ENCODE measurements at regions of chr5 and their contacts with region 1.

Region 1: DNA sequence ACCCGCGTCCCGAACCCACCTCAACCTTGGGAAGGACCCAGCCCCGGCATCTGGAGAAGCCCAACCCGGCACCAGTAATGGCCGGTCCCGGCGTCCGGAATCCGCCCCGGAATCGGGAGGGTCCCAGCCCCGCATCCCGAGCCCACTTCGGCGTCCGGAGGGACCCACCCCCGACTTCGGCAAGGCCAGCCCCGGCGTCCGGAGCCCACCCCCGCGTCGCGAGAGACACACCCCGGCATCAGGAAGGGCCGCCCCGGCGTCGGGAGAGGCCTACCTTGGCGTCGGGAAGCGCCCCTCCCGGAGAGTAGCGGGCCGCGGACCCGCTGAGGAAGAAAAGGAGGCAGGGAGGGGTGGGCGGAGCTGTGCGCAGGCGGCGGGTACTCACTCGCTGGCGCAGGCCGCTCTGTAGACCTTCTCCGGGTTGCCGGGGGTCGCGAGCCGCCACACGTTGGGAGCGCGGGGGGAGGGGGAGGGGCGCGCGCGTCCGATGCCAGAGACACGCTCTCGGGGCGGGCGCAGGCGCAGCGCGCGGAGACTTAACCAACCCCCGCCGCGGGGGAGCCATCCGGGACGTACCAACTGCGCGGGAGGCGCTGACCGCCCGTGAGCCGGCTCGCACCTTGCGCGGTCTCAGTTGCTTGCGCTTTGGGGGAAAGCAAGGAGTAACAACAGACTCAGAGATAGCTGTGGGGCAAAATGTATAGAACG is at the start of gene UIMC1:
- DNase-seq: peak; percentile 81 to 92 (median 87)
- H3K4me3 ChIP-seq: peak within 1 kb of the TSS; percentile 43 to 98 (median 90)
- H3K27ac ChIP-seq: peak within 1 kb of the TSS; percentile 53 to 96 (median 88)
- H3K27me3 ChIP-seq: no peaks in the 10 kb centered on the region
- CTCF ChIP-seq: peak in 22 of 56 donors; percentile 8 to 44 (median 23)
- total RNA-seq, gene UIMC1: 37.0 to 83.1 (median 53.2) TPM

Region 2: DNA sequence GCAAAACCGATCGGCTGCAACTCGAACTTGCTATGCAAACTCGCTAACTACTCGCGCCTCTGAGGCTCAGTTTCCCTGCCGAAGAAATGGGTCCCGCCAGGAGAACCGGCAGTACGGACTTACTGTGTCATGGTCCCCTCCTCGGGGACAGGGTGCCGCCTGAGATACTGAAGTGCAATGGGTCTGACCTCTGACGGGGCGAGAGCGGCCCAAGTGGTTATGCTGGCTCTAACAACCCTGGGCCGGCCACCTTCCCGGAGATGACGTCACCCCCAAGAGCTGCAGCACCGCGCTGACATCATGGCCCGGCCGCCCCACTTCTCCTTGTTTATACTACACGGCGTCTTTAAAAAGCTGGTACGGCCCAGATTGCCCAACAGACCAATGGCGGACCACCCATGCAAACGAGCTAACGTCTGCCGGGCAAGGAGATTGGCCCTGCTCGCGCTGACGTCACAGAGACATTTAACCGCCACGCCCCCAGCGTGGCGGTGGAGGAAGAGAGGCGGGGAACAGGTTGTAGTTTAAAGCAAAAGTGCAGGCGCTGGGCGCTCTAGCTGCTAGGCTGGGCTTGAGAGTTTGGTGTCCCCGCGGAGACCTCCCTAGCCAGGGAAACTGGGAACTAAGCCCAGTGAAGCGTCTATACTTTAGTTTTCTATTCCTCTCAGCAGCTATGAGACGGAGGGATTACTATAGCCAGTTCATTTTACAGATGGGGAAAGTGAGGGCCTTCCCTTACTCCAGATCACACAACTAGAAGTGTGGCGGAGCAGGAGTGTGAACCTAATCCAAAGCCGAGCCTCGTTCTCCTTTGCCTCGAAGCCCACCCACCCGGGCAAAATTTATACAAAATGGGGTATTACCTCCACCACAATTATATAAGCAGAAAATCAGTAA is 468.6 kb before region 1 on chr5:
- intact Hi-C with region 1: loop called (anchors 5 to 10 kb)
- DNase-seq: peak; percentile 98 to 100 (median 100)
- H3K4me3 ChIP-seq: peak overlapping the region; percentile 72 to 100 (median 92)
- H3K27ac ChIP-seq: peak overlapping the region; percentile 74 to 100 (median 98)
- H3K27me3 ChIP-seq: no peaks in the 10 kb centered on the region
- CTCF ChIP-seq: peak in 10 of 56 donors; percentile 12 to 38 (median 14)

Region 3: DNA sequence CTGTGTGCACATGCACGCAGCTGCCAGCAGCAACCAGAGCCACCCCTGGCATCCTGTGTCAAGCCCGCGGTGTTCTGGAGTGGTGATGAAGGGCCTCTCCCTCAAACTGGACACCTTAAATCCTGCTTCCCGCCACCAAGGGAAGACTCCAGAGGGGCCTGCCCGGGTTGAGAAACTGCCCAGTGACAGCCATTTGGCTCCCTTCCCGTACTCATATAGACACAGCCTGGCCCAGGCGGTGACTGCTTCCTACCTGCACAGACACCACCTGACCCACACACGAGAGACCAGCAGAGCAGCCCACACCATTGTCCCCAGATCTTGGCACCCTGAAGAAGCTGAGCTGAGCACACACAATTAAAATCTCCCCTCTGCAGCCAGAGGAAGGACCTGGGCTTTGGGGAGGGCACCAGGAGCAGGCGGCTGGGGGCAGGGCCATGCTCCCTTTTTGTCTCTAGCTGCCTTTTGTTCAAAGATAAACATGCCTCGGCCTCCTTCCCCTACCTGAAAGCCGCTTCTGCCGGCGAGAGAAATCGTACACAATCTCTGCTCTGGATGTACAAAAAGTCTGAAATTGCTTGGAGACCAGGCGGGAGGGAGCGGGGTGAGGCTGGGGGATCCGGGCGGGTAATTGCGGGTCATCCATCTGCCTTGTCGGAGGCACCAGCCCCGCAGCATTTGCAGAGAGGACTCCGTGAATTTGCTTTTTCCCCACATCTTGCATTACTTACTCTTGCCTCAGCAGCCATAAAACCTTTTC is 280.7 kb before region 1 on chr5:
- intact Hi-C with region 1: no loop called
- DNase-seq: peak in 1 of 10 donors; percentile 38
- H3K4me3 ChIP-seq: no peak overlapping the region
- H3K27ac ChIP-seq: no peak overlapping the region
- H3K27me3 ChIP-seq: peaks cover 0 to 19% (median 0%) of the 10 kb centered on the region in 45 donors
- CTCF ChIP-seq: no peak

Region 4: DNA sequence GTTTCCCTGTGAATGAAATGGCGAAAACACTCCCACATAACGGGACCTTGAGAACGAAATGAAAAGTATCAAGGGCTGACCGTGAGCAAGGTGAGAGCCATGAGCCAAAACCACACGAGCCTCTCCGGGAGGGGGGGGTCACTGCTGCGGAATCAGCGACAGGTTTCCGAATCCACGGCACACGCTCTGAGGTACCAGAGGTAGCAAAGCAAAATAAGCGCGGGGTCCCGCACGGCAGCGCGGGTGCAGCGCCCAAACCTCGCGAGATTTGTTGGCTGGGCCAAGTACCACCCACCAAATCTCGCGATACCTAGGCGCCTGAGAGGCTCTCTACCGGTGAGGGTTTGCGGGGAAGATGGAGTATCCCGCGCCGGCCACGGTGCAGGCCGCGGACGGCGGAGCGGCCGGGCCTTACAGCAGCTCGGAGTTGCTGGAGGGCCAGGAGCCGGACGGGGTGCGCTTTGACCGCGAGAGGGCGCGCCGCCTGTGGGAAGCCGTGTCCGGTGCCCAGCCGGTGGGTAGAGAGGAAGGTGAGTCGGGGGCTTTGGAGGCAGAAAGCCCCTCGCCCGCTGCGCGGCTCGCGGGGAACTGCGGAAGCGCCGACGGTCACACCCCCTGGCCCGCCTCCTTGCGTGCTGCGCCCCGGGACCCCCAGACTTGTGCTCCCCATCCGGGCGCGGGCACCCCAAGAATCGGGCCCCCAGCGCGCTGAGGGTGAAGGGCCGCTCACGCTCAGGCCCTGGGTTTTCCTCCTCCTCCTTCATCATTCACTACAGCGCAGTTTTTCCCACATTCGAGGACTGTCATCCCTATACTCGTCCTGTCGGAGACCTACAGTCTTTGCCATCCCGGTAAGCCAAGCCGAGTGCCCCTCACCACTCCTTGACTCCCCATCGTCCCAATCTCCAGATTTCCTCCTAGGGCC is 16.2 kb after region 1 on chr5 and contains the start of gene ZNF346:
- intact Hi-C with region 1: loop called in 1 of 2 experiments (anchors 2 kb)
- DNase-seq: peak; percentile 71 to 95 (median 89)
- H3K4me3 ChIP-seq: peak within 1 kb of the TSS; percentile 63 to 100 (median 88)
- H3K27ac ChIP-seq: peak within 1 kb of the TSS; percentile 24 to 95 (median 86)
- H3K27me3 ChIP-seq: no peaks in the 10 kb centered on the region
- CTCF ChIP-seq: peak in 54 of 56 donors; percentile 39 to 85 (median 60)
- total RNA-seq, gene ZNF346: 28.1 to 67.6 (median 44.9) TPM

Measured in dorsolateral prefrontal cortex (tissue), 120 donors.